ENCODE measurements at regions of chr17 and their contacts with region 1.

Region 1: GRCh38 chr17:56786989-56787482 is 46.7 kb downstream of the C17orf67 start:
- DNase-seq: peak; percentile 27 to 70
- ATAC-seq: peak; percentile 87 to 94
- H3K4me3 ChIP-seq: no peak overlapping the region
- H3K27ac ChIP-seq: peak overlapping the region; percentile 70 to 72
- H3K4me1 ChIP-seq: peaks cover 27% of the 10 kb centered on the region
- CTCF ChIP-seq: no peak
- EP300 ChIP-seq: peak in 1 of 2 experiments; percentile 32; a peak in 2 of 5 replicates
- POLR2A ChIP-seq: no peak
- RAD21 ChIP-seq: no peak

Region 2: GRCh38 chr17:55490376-55490775 is 1296.7 kb before region 1 on chr17:
- CTCF ChIA-PET with region 1: no interaction called
- POLR2A ChIA-PET with region 1: interaction called, 10 read pairs
- DNase-seq: no peak
- ATAC-seq: no peak
- H3K4me3 ChIP-seq: no peak overlapping the region
- H3K27ac ChIP-seq: peak overlapping the region in 1 of 2 experiments; percentile 1; a peak in 2 of 6 replicates
- H3K4me1 ChIP-seq: peaks cover 36% of the 10 kb centered on the region
- CTCF ChIP-seq: no peak
- EP300 ChIP-seq: no peak
- POLR2A ChIP-seq: no peak
- RAD21 ChIP-seq: no peak

Region 3: DNA sequence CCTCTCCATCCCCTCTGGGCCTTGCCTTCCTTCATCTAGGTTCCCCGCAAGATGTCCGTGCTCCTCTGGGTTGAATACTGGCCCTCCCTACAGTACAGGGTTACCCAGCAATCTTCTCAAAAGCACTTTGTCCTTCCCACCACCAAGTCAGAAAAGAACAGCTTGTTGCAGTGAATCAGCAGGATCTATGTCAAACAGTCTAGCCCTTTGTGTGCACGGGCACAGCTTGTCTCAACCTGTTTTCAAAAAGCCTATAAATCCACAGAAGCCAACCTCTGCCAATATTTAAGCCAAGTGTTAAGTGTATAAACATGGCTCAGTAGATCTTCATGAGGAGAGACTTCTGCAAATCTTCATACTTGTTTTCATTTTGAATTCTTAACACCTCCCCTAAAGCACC is 21.5 kb after region 1 on chr17:
- CTCF ChIA-PET with region 1: no interaction called
- POLR2A ChIA-PET with region 1: no interaction called
- DNase-seq: no peak
- ATAC-seq: no peak
- H3K4me3 ChIP-seq: no peak overlapping the region
- H3K27ac ChIP-seq: no peak overlapping the region
- H3K4me1 ChIP-seq: no peaks in the 10 kb centered on the region
- CTCF ChIP-seq: no peak
- EP300 ChIP-seq: no peak
- POLR2A ChIP-seq: no peak
- RAD21 ChIP-seq: no peak

Region 4: GRCh38 chr17:56826611-56827414 is 39.8 kb after region 1 on chr17:
- CTCF ChIA-PET with region 1: no interaction called
- POLR2A ChIA-PET with region 1: no interaction called
- DNase-seq: no peak
- ATAC-seq: no peak
- H3K4me3 ChIP-seq: no peak overlapping the region
- H3K27ac ChIP-seq: no peak overlapping the region
- H3K4me1 ChIP-seq: peaks cover 11% of the 10 kb centered on the region; the same call in 2 of the 3 replicates
- CTCF ChIP-seq: no peak
- EP300 ChIP-seq: no peak
- POLR2A ChIP-seq: no peak
- RAD21 ChIP-seq: no peak

Measured in A549 (cell line).